ENCODE measurements at regions of chr3 and their contacts with region 1.

Region 1: GRCh38 chr3:48178072-48178471 is 10.1 kb downstream of the CDC25A start:
- DNase-seq: no peak
- ATAC-seq: no peak
- H3K4me3 ChIP-seq: no peak overlapping the region
- H3K27ac ChIP-seq: no peak overlapping the region
- H3K4me1 ChIP-seq: no peaks in the 10 kb centered on the region; the same call in 1 of the 2 replicates
- H3K27me3 ChIP-seq: no peaks in the 10 kb centered on the region
- CTCF ChIP-seq: no peak
- EP300 ChIP-seq: no peak
- POLR2A ChIP-seq: no peak
- RAD21 ChIP-seq: no peak

Region 2: GRCh38 chr3:48077815-48078214 is 100.3 kb before region 1 on chr3:
- CTCF ChIA-PET with region 1: no interaction called
- POLR2A ChIA-PET with region 1: no interaction called
- RAD21 ChIA-PET with region 1: no interaction called
- SMC1A ChIA-PET with region 1: no interaction called
- in situ Hi-C with region 1: no loop called
- intact Hi-C with region 1: no loop called
- DNase-seq: no peak
- ATAC-seq: no peak
- H3K4me3 ChIP-seq: no peak overlapping the region
- H3K27ac ChIP-seq: no peak overlapping the region
- H3K4me1 ChIP-seq: no peaks in the 10 kb centered on the region
- H3K27me3 ChIP-seq: no peaks in the 10 kb centered on the region
- CTCF ChIP-seq: no peak
- EP300 ChIP-seq: no peak
- POLR2A ChIP-seq: no peak
- RAD21 ChIP-seq: no peak

Region 3: GRCh38 chr3:48129921-48130320 is 48.2 kb before region 1 on chr3:
- CTCF ChIA-PET with region 1: no interaction called
- POLR2A ChIA-PET with region 1: no interaction called
- RAD21 ChIA-PET with region 1: no interaction called
- SMC1A ChIA-PET with region 1: no interaction called
- in situ Hi-C with region 1: no loop called
- intact Hi-C with region 1: no loop called
- DNase-seq: no peak
- ATAC-seq: no peak
- H3K4me3 ChIP-seq: no peak overlapping the region
- H3K27ac ChIP-seq: no peak overlapping the region
- H3K4me1 ChIP-seq: peaks cover 15% of the 10 kb centered on the region
- H3K27me3 ChIP-seq: no peaks in the 10 kb centered on the region
- CTCF ChIP-seq: no peak
- EP300 ChIP-seq: no peak
- POLR2A ChIP-seq: no peak
- RAD21 ChIP-seq: no peak

Region 4: GRCh38 chr3:48188266-48189201 is 10.5 kb after region 1 on chr3 and contains the start of gene CDC25A:
- CTCF ChIA-PET with region 1: interaction called, 11 read pairs
- POLR2A ChIA-PET with region 1: interaction called, 11 read pairs
- RAD21 ChIA-PET with region 1: interaction called, 11 read pairs
- SMC1A ChIA-PET with region 1: interaction called, 9 read pairs
- in situ Hi-C with region 1: no loop called
- intact Hi-C with region 1: no loop called
- DNase-seq: peak; percentile 97
- ATAC-seq: peak; percentile 98
- H3K4me3 ChIP-seq: peak within 1 kb of the TSS; percentile 92
- H3K27ac ChIP-seq: peak within 1 kb of the TSS; percentile 74
- H3K4me1 ChIP-seq: peaks cover 12% of the 10 kb centered on the region; the same call in 1 of the 2 replicates
- H3K27me3 ChIP-seq: no peaks in the 10 kb centered on the region
- CTCF ChIP-seq: no peak
- EP300 ChIP-seq: no peak
- POLR2A ChIP-seq: peak; percentile 82
- RAD21 ChIP-seq: no peak
- polyA plus RNA-seq, gene CDC25A: 2.9 to 5.6 TPM